Naive thymus-derived CD4-positive, alpha-beta T cell (primary cell): ENCODE measurements at regions of chr2 and their contacts with region 1.

Region 1: GRCh38 chr2:234335661-234336228 is 161.1 kb downstream of the ARL4C start:
- DNase-seq: peak in 8 of 9 donors; percentile 33 to 75 (median 70)
- ATAC-seq: peak; percentile 92
- H3K4me3 ChIP-seq: peak overlapping the region; percentile 3
- H3K4me3 Mint-ChIP-seq: peak overlapping the region; percentile 56 to 85 (median 78)
- H3K27ac ChIP-seq: peak overlapping the region; percentile 24
- H3K27ac Mint-ChIP-seq: peak overlapping the region; percentile 61 to 98 (median 93)
- H3K4me1 ChIP-seq: peaks cover 0 to 16% of the 10 kb centered on the region in 2 donors
- H3K4me1 Mint-ChIP-seq: peaks cover 15 to 60% (median 45%) of the 10 kb centered on the region in 7 donors
- H3K27me3 ChIP-seq: no peaks in the 10 kb centered on the region
- H3K27me3 Mint-ChIP-seq: no peaks in the 10 kb centered on the region

Region 2: GRCh38 chr2:234324116-234324515 is 11.6 kb before region 1 on chr2:
- CTCF ChIA-PET with region 1: no interaction called
- POLR2A ChIA-PET with region 1: interaction called, 10 read pairs
- intact Hi-C with region 1: no loop called
- DNase-seq: no peak
- ATAC-seq: no peak
- H3K4me3 ChIP-seq: no peak overlapping the region
- H3K4me3 Mint-ChIP-seq: peak overlapping the region in 4 of 10 donors; percentile 5 to 52 (median 28)
- H3K27ac ChIP-seq: no peak overlapping the region
- H3K27ac Mint-ChIP-seq: peak overlapping the region; percentile 81 to 98 (median 89)
- H3K4me1 ChIP-seq: peaks cover 15 to 23% of the 10 kb centered on the region in 2 donors
- H3K4me1 Mint-ChIP-seq: peaks cover 21 to 76% (median 56%) of the 10 kb centered on the region in 7 donors
- H3K27me3 ChIP-seq: no peaks in the 10 kb centered on the region
- H3K27me3 Mint-ChIP-seq: no peaks in the 10 kb centered on the region

Region 3: GRCh38 chr2:234451852-234452625 is 116.3 kb after region 1 on chr2:
- CTCF ChIA-PET with region 1: no interaction called
- POLR2A ChIA-PET with region 1: no interaction called
- intact Hi-C with region 1: no loop called
- DNase-seq: peak in 7 of 9 donors; percentile 30 to 74 (median 62)
- ATAC-seq: peak; percentile 41
- H3K4me3 ChIP-seq: peak overlapping the region; percentile 71
- H3K4me3 Mint-ChIP-seq: peak overlapping the region; percentile 83 to 99 (median 91)
- H3K27ac ChIP-seq: peak overlapping the region; percentile 96
- H3K27ac Mint-ChIP-seq: peak overlapping the region; percentile 90 to 100 (median 96)
- H3K4me1 ChIP-seq: peaks cover 66 to 70% of the 10 kb centered on the region in 2 donors
- H3K4me1 Mint-ChIP-seq: peaks cover 32 to 88% (median 84%) of the 10 kb centered on the region in 7 donors
- H3K27me3 ChIP-seq: no peaks in the 10 kb centered on the region
- H3K27me3 Mint-ChIP-seq: no peaks in the 10 kb centered on the region

Region 4: GRCh38 chr2:235180642-235181041 is 844.9 kb after region 1 on chr2:
- CTCF ChIA-PET with region 1: no interaction called
- POLR2A ChIA-PET with region 1: no interaction called
- intact Hi-C with region 1: no loop called
- DNase-seq: no peak
- ATAC-seq: no peak
- H3K4me3 ChIP-seq: no peak overlapping the region
- H3K4me3 Mint-ChIP-seq: no peak overlapping the region
- H3K27ac ChIP-seq: no peak overlapping the region
- H3K27ac Mint-ChIP-seq: no peak overlapping the region
- H3K4me1 ChIP-seq: no peaks in the 10 kb centered on the region
- H3K4me1 Mint-ChIP-seq: no peaks in the 10 kb centered on the region
- H3K27me3 ChIP-seq: peaks cover 0 to 4% of the 10 kb centered on the region in 2 donors
- H3K27me3 Mint-ChIP-seq: peaks cover 0 to 40% (median 29%) of the 10 kb centered on the region in 5 donors